HEK293 (cell line): ENCODE measurements at regions of chr15 and their contacts with region 1.

Region 1: DNA sequence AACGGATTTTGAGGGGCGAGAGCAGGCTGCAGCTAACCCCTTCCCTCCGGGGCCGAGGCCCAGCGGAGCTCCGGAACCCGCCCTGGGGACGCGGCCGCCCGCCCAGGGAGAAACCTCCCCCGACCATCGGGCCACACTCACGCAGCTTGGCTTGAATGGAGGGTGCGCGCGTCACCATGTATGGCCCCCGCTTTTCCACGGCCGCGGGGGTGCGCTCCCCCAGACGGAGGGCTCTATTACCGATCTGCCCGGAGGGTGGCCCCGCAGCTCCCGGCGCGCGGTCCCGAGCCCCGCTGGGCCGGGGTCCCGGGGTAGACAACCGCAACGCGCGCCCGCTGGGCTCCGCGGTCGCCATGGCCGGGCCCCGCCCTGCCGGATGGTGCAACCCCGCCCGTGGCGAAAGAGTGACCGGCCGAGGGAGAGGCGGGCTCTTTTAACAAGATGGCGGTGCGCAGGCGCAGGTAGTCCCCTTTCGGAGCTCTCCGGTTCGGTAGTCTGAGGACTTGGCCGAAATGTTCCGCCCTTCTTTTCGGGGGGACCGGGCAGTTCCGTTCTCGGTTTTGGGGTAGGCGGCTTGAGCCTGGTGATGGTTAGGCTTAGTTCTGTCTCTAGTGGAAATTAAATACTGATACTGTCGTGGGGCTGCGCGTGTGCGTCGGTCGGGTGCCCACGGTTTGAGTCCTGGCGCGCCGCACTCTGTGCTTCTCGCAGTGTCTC is at the start of gene FAM219B:
- H3K4me3 ChIP-seq: peak within 1 kb of the TSS; percentile 82
- H3K27ac ChIP-seq: peak within 1 kb of the TSS; percentile 89
- H3K4me1 ChIP-seq: peaks cover 3% of the 10 kb centered on the region; the same call in 1 of the 2 replicates
- CTCF ChIP-seq: peak; percentile 60

Region 2: DNA sequence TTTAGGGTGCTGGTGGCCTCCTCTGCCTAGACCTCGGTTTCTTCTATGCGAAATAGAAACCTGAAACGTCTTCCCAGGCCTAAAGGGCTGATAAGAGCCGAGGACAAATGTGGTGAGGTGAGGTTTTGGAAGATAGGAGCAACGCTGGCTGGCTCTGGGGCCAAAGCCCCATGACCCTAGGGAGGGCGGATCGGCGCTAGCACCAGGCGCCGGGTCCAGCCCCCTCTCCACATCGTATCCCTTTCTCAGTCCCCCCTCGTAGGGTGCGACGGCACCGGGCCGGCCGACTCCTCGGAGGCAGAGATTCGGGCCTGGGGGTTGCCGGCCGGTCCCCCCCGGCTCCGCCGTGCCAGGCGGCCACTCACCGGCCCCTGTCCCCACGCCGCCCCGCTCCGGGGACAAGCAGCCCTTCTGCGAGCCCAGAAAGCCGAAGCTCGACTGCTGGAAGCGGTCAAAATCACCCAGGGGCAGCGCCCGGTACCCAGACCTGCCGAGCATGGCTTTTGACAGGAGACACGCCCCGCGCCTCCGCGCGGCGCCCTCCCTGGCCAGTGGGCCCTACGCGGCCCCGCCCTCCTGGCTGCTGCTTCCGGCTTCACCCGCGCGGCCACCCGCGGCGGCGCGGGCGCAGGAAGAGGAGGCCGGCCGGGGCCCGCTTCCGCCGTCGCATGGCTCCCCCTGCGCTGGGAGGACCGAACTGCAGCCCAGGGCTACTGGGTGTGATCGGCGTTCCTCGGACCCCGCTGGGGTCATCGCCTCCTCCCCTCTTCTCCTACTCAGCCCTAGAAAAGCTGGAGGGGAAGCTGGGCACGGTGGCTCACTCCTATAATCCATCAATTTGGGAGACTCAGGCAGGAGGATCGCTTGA is 914.6 kb before region 1 on chr15 and contains the start of gene STOML1:
- CTCF ChIA-PET with region 1: no interaction called
- POLR2A ChIA-PET with region 1: no interaction called
- H3K4me3 ChIP-seq: peak within 1 kb of the TSS; percentile 66
- H3K27ac ChIP-seq: no peak within 1 kb of the TSS
- H3K4me1 ChIP-seq: peaks cover 9% of the 10 kb centered on the region; the same call in 1 of the 2 replicates
- CTCF ChIP-seq: peak; percentile 93

Region 3: GRCh38 chr15:74635228-74635627 is 271.4 kb before region 1 on chr15:
- CTCF ChIA-PET with region 1: interaction called, 29 read pairs
- POLR2A ChIA-PET with region 1: no interaction called
- H3K4me3 ChIP-seq: no peak overlapping the region
- H3K27ac ChIP-seq: no peak overlapping the region
- H3K4me1 ChIP-seq: no peaks in the 10 kb centered on the region
- CTCF ChIP-seq: peak; percentile 94

Region 4: GRCh38 chr15:74709011-74709410 is 197.6 kb before region 1 on chr15:
- CTCF ChIA-PET with region 1: no interaction called
- POLR2A ChIA-PET with region 1: no interaction called
- H3K4me3 ChIP-seq: no peak overlapping the region
- H3K27ac ChIP-seq: no peak overlapping the region
- H3K4me1 ChIP-seq: no peaks in the 10 kb centered on the region
- CTCF ChIP-seq: no peak

Region 5: GRCh38 chr15:74732846-74733245 is 173.8 kb before region 1 on chr15:
- CTCF ChIA-PET with region 1: no interaction called
- POLR2A ChIA-PET with region 1: no interaction called
- H3K4me3 ChIP-seq: no peak overlapping the region
- H3K27ac ChIP-seq: no peak overlapping the region
- H3K4me1 ChIP-seq: no peaks in the 10 kb centered on the region
- CTCF ChIP-seq: no peak

Region 6: GRCh38 chr15:74799856-74800547 is 106.6 kb before region 1 on chr15:
- CTCF ChIA-PET with region 1: interaction called, 10 read pairs
- POLR2A ChIA-PET with region 1: no interaction called
- H3K4me3 ChIP-seq: no peak overlapping the region
- H3K27ac ChIP-seq: peak overlapping the region; percentile 20; the same call in 1 of the 2 replicates
- H3K4me1 ChIP-seq: no peaks in the 10 kb centered on the region
- CTCF ChIP-seq: peak; percentile 97

Region 7: GRCh38 chr15:74842581-74843444 is 63.8 kb before region 1 on chr15 and contains the start of gene ULK3:
- CTCF ChIA-PET with region 1: interaction called, 29 read pairs
- POLR2A ChIA-PET with region 1: interaction called, 12 read pairs
- H3K4me3 ChIP-seq: peak within 1 kb of the TSS; percentile 88
- H3K27ac ChIP-seq: peak within 1 kb of the TSS; percentile 86
- H3K4me1 ChIP-seq: peaks cover 10% of the 10 kb centered on the region
- CTCF ChIP-seq: peak; percentile 99

Region 8: GRCh38 chr15:74873036-74873755 is 33.4 kb before region 1 on chr15 and contains the start of gene SCAMP2:
- CTCF ChIA-PET with region 1: interaction called, 20 read pairs
- POLR2A ChIA-PET with region 1: interaction called, 8 read pairs
- H3K4me3 ChIP-seq: peak within 1 kb of the TSS; percentile 96
- H3K27ac ChIP-seq: peak within 1 kb of the TSS; percentile 74
- H3K4me1 ChIP-seq: peaks cover 7% of the 10 kb centered on the region
- CTCF ChIP-seq: no peak

Region 9: DNA sequence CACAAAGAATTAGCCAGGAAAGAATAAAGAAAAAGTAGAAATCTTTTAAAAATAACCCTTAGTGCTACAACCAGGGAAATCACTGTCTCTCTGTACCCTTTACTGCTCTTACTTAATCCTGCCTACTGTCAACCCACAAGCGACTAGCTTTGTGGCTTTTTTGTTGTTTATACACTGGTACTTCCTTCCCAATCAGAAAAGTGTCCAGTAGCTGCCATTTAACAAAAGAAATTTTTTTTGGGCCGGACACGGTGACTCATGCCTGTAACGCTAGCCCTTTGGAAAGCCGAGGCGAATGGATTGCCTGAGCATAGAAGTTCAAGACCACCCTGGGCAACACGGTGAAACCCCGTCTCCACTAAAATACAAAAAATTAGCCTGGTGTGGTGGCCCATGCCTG is 13.9 kb after region 1 on chr15:
- CTCF ChIA-PET with region 1: interaction called, 13 read pairs
- POLR2A ChIA-PET with region 1: interaction called, 10 read pairs
- H3K4me3 ChIP-seq: no peak overlapping the region
- H3K27ac ChIP-seq: no peak overlapping the region
- H3K4me1 ChIP-seq: no peaks in the 10 kb centered on the region
- CTCF ChIP-seq: no peak

Region 10: DNA sequence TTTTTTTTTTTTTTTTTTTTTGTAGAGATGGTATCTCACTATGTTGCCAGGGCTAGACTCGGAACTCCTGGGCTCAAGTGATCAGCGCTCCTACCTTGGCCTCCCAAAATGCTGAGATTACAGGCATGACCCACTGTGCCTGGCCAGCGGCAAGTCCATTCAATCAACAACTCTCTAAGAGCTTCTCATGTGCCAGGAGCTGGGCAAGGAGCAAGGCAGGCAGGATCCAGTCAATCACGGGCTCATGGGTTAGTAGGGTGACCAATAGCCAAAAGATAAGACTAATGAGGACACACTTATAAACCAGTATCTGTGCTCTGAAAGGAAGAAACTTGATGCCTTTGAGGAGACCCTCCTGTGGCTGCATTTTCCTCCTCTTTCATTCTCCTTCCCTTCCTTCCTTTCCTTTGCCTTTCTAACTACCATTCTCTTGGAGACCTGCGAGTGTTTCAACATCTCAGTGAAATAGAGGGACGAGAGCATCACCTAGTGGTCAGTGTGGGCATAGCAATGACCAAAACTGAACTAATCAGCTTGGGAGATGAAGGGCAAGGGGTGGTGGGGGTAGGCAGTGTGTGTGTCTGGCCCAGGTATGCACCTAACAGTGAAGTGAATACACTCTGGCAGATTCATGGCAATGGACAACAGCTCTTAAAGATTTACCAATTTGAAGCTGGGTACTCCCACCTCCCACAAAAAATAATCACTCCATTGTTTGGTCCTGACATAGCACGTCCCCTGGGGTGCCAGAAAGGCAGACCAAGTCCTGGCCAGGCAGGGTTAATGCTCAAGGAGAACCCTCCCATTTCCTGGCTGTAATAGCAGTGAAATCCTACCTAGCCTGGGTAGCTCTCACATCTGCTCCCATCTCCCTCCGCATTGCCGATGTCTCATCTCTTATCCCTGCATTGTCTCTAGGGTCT is 43.7 kb after region 1 on chr15:
- CTCF ChIA-PET with region 1: interaction called, 79 read pairs
- POLR2A ChIA-PET with region 1: interaction called, 4 read pairs
- H3K4me3 ChIP-seq: no peak overlapping the region
- H3K27ac ChIP-seq: no peak overlapping the region
- H3K4me1 ChIP-seq: peaks cover 4% of the 10 kb centered on the region; the same call in 1 of the 2 replicates
- CTCF ChIP-seq: peak; percentile 97

Region 11: DNA sequence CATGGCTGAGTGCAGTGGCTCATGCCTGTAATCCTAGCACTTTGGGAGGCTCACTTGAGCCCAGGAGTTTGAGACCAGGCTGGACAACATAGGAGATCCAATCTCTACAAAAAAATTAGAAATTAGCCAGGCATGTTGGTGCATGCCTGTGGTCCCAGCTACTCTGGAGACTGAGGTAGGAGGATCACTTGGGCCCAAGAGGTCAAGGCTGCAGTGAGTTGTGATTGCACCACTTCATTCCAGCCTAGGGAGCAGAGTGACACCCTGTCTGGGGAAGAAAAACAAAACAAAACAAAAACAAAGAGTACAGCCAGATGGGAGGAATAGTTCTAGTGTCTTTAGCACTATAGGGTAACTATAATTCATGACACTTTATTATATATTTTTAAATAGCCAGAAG is 403.1 kb after region 1 on chr15:
- CTCF ChIA-PET with region 1: no interaction called
- POLR2A ChIA-PET with region 1: no interaction called
- H3K4me3 ChIP-seq: no peak overlapping the region
- H3K27ac ChIP-seq: no peak overlapping the region
- H3K4me1 ChIP-seq: no peaks in the 10 kb centered on the region
- CTCF ChIP-seq: no peak